ENCODE measurements at regions of chr12 and their contacts with region 1.

Region 1: GRCh38 chr12:29889737-29890136 is 106.0 kb upstream of the TMTC1 start:
- DNase-seq: peak in 1 of 2 donors; percentile 12
- ATAC-seq: no peak

Region 2: DNA sequence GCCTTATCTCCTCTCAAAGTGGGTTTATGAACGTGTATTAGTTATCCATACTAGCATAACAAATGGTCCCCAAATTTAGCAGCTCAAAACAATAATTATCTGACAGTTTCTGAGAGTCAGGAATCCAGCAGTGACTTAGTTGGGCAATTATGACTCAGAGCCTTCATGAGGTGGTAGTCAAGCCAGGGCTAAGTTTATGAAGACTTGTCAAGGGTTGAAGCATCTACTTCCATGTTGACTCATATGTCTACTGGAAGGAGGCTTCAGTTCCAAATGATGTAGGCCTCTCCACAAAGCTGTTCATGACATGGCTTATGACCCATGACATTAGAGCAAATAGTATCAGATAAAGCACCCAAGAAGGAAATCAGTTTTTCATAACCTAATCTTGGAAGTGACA is 732.8 kb after region 1 on chr12:
- intact Hi-C with region 1: no loop called
- DNase-seq: no peak
- ATAC-seq: no peak

Region 3: DNA sequence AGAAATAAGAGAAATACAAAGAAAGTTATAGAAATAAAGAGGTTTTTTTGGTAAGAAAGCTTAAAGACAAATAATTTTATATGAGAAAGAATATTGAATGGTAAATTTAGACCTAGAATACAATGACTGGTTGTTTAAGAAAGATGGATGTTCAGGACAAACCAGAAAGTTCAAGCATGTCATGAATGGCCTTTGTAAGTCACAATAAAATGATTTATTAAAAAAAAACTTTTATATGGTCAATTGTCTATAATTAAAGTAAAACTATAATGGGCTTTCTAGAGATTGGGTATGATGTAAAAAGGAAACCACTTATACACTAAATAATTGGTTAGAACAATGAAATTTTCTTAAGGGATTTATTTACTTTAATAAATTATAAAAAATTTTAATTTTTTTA is 884.9 kb after region 1 on chr12:
- intact Hi-C with region 1: loop called in 1 of 2 experiments (anchors 10 kb)
- DNase-seq: no peak
- ATAC-seq: no peak